HCT116 (cell line): ENCODE measurements at regions of chr1 and their contacts with region 1.

Region 1: DNA sequence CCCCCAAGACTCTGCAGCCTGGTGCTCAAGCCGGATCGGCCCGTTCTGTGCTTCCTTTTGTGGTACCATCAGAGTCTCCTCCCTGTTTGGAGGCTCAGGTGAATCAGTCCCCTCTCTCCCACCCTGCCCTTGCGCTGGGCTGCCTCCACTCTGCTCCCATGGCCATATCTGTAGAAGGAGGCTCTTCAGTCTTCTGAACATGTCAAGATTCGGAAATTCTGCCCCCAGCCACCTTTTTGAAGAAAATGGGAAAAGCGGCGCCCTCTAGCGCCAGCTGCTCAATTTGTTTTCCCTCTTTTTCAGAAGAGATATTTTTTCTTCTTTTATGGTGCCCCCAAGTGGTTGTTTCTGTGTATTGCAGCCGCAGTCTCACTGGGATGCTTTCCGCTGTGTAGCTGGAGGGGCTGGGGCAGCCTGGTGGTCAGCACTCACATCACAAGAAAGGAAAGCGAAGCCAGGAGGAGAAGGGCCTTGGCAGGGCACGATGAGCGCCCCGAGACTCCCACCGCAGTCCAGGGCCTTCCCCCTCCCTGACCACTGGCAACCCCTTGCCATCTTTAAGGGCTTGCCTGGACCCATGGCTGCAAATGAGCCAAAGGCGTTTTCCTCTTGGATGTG is 58.4 kb upstream of the CACNA1E start:
- DNase-seq: peak; percentile 50
- ATAC-seq: peak; percentile 80
- H3K4me3 ChIP-seq: no peak overlapping the region
- H3K27ac ChIP-seq: no peak overlapping the region
- H3K4me1 ChIP-seq: peaks cover 0 to 4% of the 10 kb centered on the region in 2 experiments; a peak in 1 of 4 replicates
- H3K27me3 ChIP-seq: no peaks in the 10 kb centered on the region; the same call in 1 of the 2 replicates
- CTCF ChIP-seq: peak; percentile 95 to 100 (median 100)
- POLR2A ChIP-seq: no peak
- RAD21 ChIP-seq: peak; percentile 95

Region 2: GRCh38 chr1:180515864-180516388 is 909.0 kb before region 1 on chr1:
- CTCF ChIA-PET with region 1: no interaction called
- POLR2A ChIA-PET with region 1: no interaction called
- RAD21 ChIA-PET with region 1: no interaction called
- intact Hi-C with region 1: loop called (anchors 10 kb)
- DNase-seq: peak; percentile 73
- ATAC-seq: peak; percentile 99
- H3K4me3 ChIP-seq: no peak overlapping the region
- H3K27ac ChIP-seq: peak overlapping the region; percentile 11; the same call in 1 of the 2 replicates
- H3K4me1 ChIP-seq: peaks cover 4 to 8% of the 10 kb centered on the region in 2 experiments; a peak in 2 of 4 replicates
- H3K27me3 ChIP-seq: no peaks in the 10 kb centered on the region
- CTCF ChIP-seq: peak; percentile 64 to 83 (median 80)
- POLR2A ChIP-seq: no peak
- RAD21 ChIP-seq: peak; percentile 94

Region 3: GRCh38 chr1:180881806-180882509 is 542.9 kb before region 1 on chr1:
- CTCF ChIA-PET with region 1: interaction called, 4 read pairs
- POLR2A ChIA-PET with region 1: no interaction called
- RAD21 ChIA-PET with region 1: no interaction called
- intact Hi-C with region 1: loop called (anchors 10 kb)
- DNase-seq: peak; percentile 21
- ATAC-seq: peak; percentile 78
- H3K4me3 ChIP-seq: no peak overlapping the region
- H3K27ac ChIP-seq: no peak overlapping the region
- H3K4me1 ChIP-seq: peaks cover 0 to 4% of the 10 kb centered on the region in 2 experiments; a peak in 1 of 4 replicates
- H3K27me3 ChIP-seq: no peaks in the 10 kb centered on the region
- CTCF ChIP-seq: peak; percentile 21 to 68 (median 58); a peak in 4 of 6 replicates
- POLR2A ChIP-seq: no peak
- RAD21 ChIP-seq: peak; percentile 81

Region 4: GRCh38 chr1:181152892-181153633 is 271.8 kb before region 1 on chr1:
- CTCF ChIA-PET with region 1: no interaction called
- POLR2A ChIA-PET with region 1: no interaction called
- RAD21 ChIA-PET with region 1: no interaction called
- intact Hi-C with region 1: no loop called
- DNase-seq: no peak
- ATAC-seq: no peak
- H3K4me3 ChIP-seq: no peak overlapping the region
- H3K27ac ChIP-seq: no peak overlapping the region
- H3K4me1 ChIP-seq: peaks cover 0 to 3% of the 10 kb centered on the region in 2 experiments; a peak in 1 of 4 replicates
- H3K27me3 ChIP-seq: no peaks in the 10 kb centered on the region
- CTCF ChIP-seq: no peak
- POLR2A ChIP-seq: no peak
- RAD21 ChIP-seq: no peak

Region 5: GRCh38 chr1:181189691-181190363 is 235.1 kb before region 1 on chr1:
- CTCF ChIA-PET with region 1: interaction called, 46 read pairs
- POLR2A ChIA-PET with region 1: no interaction called
- RAD21 ChIA-PET with region 1: interaction called, 6 to 9 read pairs
- intact Hi-C with region 1: loop called (anchors 1 kb)
- DNase-seq: peak; percentile 19
- ATAC-seq: peak; percentile 98
- H3K4me3 ChIP-seq: peak overlapping the region in 1 of 2 experiments; percentile 25; a peak in 3 of 4 replicates
- H3K27ac ChIP-seq: no peak overlapping the region
- H3K4me1 ChIP-seq: peaks cover 0 to 5% of the 10 kb centered on the region in 2 experiments; a peak in 1 of 4 replicates
- H3K27me3 ChIP-seq: 0 out of 2 replicates have a peak, but pooled peaks cover 9% of the 10 kb centered on the region
- CTCF ChIP-seq: peak; percentile 97 to 99 (median 98)
- POLR2A ChIP-seq: no peak
- RAD21 ChIP-seq: peak; percentile 97

Region 6: GRCh38 chr1:181232532-181232931 is 192.4 kb before region 1 on chr1:
- CTCF ChIA-PET with region 1: interaction called, 3 read pairs
- POLR2A ChIA-PET with region 1: no interaction called
- RAD21 ChIA-PET with region 1: no interaction called
- intact Hi-C with region 1: loop called (anchors 1 kb)
- DNase-seq: no peak
- ATAC-seq: no peak
- H3K4me3 ChIP-seq: no peak overlapping the region
- H3K27ac ChIP-seq: no peak overlapping the region
- H3K4me1 ChIP-seq: no peaks in the 10 kb centered on the region
- H3K27me3 ChIP-seq: no peaks in the 10 kb centered on the region
- CTCF ChIP-seq: peak in 2 of 3 experiments; percentile 25 to 57; a peak in 1 of 6 replicates
- POLR2A ChIP-seq: no peak
- RAD21 ChIP-seq: peak; percentile 50